ENCODE measurements at regions of chr2 and their contacts with region 1.

Region 1: GRCh38 chr2:231104115-231104713 is 20.6 kb downstream of the HTR2B start:
- DNase-seq: peak in 1 of 2 experiments; percentile 46
- H3K4me3 ChIP-seq: no peak overlapping the region
- H3K4me3 Mint-ChIP-seq: no peak overlapping the region
- H3K27ac Mint-ChIP-seq: no peak overlapping the region
- H3K4me1 ChIP-seq: peaks cover 27% of the 10 kb centered on the region
- H3K4me1 Mint-ChIP-seq: peaks cover 13% of the 10 kb centered on the region
- H3K27me3 ChIP-seq: no peaks in the 10 kb centered on the region
- H3K27me3 Mint-ChIP-seq: no peaks in the 10 kb centered on the region
- CTCF ChIP-seq: peak; percentile 44 to 61

Region 2: DNA sequence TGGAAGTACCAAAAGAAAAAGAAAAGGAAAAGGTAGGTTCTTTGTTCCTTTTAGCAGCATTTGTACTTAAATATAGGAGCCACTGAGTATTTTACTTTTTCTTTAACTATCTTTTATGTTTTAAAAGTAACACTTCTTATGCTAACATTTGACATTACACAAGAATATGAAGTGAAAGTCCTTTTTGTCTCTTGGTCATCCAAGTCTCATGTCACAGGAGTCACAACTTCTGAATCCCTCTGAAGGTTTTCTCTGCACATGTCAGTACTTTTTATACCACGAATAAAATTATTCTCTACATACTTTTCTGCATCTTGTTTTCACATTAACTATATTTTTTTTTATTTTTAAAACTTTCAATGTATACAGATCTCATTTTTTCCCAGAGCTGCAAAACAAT is 59.5 kb after region 1 on chr2:
- CTCF ChIA-PET with region 1: no interaction called
- POLR2A ChIA-PET with region 1: no interaction called
- intact Hi-C with region 1: loop called (anchors 2 kb)
- DNase-seq: no peak
- H3K4me3 ChIP-seq: no peak overlapping the region
- H3K4me3 Mint-ChIP-seq: no peak overlapping the region
- H3K27ac Mint-ChIP-seq: no peak overlapping the region
- H3K4me1 ChIP-seq: peaks cover 8% of the 10 kb centered on the region; the same call in 1 of the 2 replicates
- H3K4me1 Mint-ChIP-seq: no peaks in the 10 kb centered on the region
- H3K27me3 ChIP-seq: no peaks in the 10 kb centered on the region
- H3K27me3 Mint-ChIP-seq: no peaks in the 10 kb centered on the region
- CTCF ChIP-seq: no peak

Region 3: GRCh38 chr2:231198291-231199173 is 94.3 kb after region 1 on chr2 and contains the start of gene ARMC9:
- CTCF ChIA-PET with region 1: interaction called, 3 read pairs
- POLR2A ChIA-PET with region 1: no interaction called
- intact Hi-C with region 1: loop called (anchors 2 kb)
- DNase-seq: peak; percentile 58 to 78
- H3K4me3 ChIP-seq: peak within 1 kb of the TSS; percentile 95
- H3K4me3 Mint-ChIP-seq: peak within 1 kb of the TSS; percentile 84
- H3K27ac Mint-ChIP-seq: peak within 1 kb of the TSS; percentile 57
- H3K4me1 ChIP-seq: 0 out of 2 replicates have a peak, but pooled peaks cover 4% of the 10 kb centered on the region
- H3K4me1 Mint-ChIP-seq: peaks cover 8% of the 10 kb centered on the region
- H3K27me3 ChIP-seq: no peaks in the 10 kb centered on the region
- H3K27me3 Mint-ChIP-seq: no peaks in the 10 kb centered on the region
- CTCF ChIP-seq: no peak
- total RNA-seq, gene ARMC9: 3.3 and 5.2 TPM in 2 replicates